Posterior vena cava (tissue), 2 donors: ENCODE measurements at regions of chr9 and their contacts with region 1.

Region 1: DNA sequence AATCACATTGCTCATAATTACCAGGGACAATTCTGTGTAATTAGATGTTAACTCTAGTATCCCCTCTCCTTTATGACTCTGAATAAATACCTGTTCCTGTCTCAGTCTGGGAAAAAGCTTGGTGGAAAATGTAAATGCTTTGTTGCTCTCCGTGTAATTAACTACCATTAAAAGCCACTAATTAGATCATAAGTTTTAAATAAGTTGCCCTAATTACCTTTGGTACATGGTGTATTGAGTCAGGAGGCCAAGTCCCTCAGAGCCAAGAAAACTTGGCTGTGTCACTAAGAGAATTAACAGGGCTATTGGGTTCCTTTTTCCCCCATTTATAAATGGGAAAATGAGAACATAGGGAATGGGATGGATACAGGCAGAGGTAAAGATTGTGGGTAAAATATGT is 617.6 kb downstream of the TLR4 start:
- DNase-seq: no peak

Region 2: DNA sequence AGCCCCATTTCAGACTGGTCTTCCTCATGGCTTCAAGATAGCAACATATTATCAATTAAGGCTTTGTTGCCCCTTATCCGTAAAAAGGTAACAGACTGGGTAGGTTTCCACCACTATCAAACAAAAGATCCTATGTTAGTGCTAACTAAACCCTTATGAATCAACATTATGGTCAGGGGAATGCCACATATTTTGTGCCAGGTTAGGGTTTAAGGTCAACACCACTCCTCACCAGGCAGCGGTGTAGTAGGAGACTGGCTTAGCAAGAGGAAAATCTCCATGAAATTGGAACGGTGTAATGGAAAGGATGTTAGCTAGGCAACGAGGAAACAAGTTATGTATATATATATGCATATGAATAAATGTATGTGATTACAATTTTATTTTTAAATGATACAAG is 38.2 kb after region 1 on chr9:
- intact Hi-C with region 1: no loop called
- DNase-seq: no peak

Region 3: DNA sequence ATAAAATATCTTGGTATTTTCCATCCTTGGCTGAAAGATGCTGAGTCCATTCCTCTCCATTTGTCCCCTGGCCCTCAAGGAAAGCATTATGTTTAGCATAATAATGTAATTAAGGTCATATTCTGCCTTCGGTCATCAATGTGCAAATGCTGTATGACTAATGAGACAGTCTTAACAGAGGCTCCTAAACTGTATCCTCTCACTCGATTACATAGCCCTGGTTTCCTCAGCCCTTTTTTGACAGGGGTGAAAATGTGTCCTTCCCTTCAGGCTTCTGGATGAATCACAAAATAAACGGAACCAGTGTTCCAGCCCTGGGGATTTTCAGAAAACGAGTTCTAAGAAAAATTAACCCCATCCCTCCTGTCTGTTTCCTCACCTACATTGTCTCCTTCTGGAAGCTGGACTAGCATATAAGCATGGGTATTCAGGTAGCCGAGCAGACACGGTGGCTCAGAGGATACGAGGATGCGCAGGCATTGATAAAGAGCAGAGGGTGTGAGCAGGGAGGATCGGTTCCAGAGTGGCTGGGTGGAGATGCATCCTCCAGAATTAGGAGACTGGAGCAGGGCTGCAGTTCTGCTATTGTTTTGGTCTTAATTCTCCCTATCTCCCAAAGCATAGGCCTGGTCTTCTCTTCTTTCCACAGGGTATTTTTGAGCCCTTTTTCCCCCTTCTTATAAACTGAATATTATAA is 125.3 kb after region 1 on chr9:
- intact Hi-C with region 1: loop called in 1 of 2 experiments (anchors 10 kb)
- DNase-seq: peak; percentile 42

Region 4: GRCh38 chr9:118606669-118607068 is 284.9 kb after region 1 on chr9:
- intact Hi-C with region 1: no loop called
- DNase-seq: no peak